AG04450 (cell line): ENCODE measurements at regions of chr19 and their contacts with region 1.

Region 1: GRCh38 chr19:50705422-50706019 is 14.1 kb downstream of the SHANK1 start:
- DNase-seq: peak; percentile 30
- H3K4me3 ChIP-seq: no peak overlapping the region
- H3K27ac ChIP-seq: no peak overlapping the region
- H3K27me3 ChIP-seq: no peaks in the 10 kb centered on the region
- CTCF ChIP-seq: peak; percentile 94

Region 2: DNA sequence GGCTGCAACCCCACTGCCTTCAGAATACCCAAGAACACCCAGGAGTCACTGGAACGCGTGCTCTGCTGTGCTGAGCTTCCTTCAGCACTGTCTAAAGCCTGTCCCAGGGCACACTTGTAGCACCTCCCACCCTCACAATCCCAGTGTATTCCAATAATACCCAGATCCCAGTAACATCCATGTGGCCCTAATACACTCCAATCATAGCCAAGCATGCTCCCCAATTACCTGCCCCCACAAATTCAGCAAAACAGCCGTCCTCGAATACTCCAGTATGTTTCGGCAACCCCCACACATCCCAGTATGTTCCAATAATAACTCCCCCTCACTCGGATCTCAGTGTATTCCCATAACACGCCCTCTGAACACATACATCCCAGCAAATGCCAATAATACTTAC is 15.1 kb before region 1 on chr19:
- CTCF ChIA-PET with region 1: no interaction called
- POLR2A ChIA-PET with region 1: no interaction called
- DNase-seq: no peak
- H3K4me3 ChIP-seq: no peak overlapping the region
- H3K27ac ChIP-seq: no peak overlapping the region
- H3K27me3 ChIP-seq: peaks cover 20% of the 10 kb centered on the region
- CTCF ChIP-seq: no peak

Region 3: GRCh38 chr19:50717026-50717723 is 11.7 kb after region 1 on chr19:
- CTCF ChIA-PET with region 1: interaction called, 10 read pairs
- POLR2A ChIA-PET with region 1: interaction called, 6 read pairs
- DNase-seq: no peak
- H3K4me3 ChIP-seq: no peak overlapping the region
- H3K27ac ChIP-seq: no peak overlapping the region
- H3K27me3 ChIP-seq: no peaks in the 10 kb centered on the region
- CTCF ChIP-seq: no peak

Region 4: GRCh38 chr19:50785329-50785728 is 79.8 kb after region 1 on chr19:
- CTCF ChIA-PET with region 1: interaction called, 23 read pairs
- POLR2A ChIA-PET with region 1: interaction called, 3 read pairs
- DNase-seq: no peak
- H3K4me3 ChIP-seq: no peak overlapping the region
- H3K27ac ChIP-seq: no peak overlapping the region
- H3K27me3 ChIP-seq: peaks cover 14% of the 10 kb centered on the region
- CTCF ChIP-seq: no peak